Naive thymus-derived CD4-positive, alpha-beta T cell (primary cell): ENCODE measurements at regions of chr2 and their contacts with region 1.

Region 1: DNA sequence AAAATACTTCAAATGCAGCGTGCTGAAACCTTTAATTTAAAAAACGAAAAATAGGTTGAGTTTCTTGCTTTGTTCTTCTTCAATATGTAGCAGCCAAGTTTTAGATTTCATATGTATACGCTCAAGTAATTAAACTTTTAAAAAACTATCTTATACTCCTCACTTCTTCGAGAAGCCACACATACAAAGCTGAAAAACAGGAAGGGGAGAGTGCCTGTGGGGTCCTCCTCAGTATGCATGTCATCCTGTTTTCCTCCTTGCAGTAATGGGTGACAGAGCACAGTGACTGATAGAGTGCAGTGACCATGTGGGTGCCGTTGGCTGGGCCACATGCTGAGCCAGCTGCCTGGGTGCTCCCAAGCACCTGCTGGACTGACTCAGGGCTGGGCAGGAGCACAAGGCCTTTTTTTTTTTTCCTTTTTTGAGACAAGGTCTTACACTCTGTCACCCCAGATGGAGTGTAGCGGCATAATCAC is 33.3 kb downstream of the UXS1 start:
- DNase-seq: peak in 8 of 9 donors; percentile 33 to 70 (median 62)
- ATAC-seq: peak; percentile 75
- H3K4me3 ChIP-seq: peak overlapping the region; percentile 77
- H3K4me3 Mint-ChIP-seq: peak overlapping the region; percentile 87 to 98 (median 95)
- H3K27ac ChIP-seq: peak overlapping the region; percentile 81
- H3K27ac Mint-ChIP-seq: peak overlapping the region; percentile 95 to 99 (median 98)
- H3K4me1 ChIP-seq: peaks cover 43 to 78% of the 10 kb centered on the region in 2 donors
- H3K4me1 Mint-ChIP-seq: peaks cover 47 to 100% (median 97%) of the 10 kb centered on the region in 7 donors
- H3K27me3 ChIP-seq: no peaks in the 10 kb centered on the region
- H3K27me3 Mint-ChIP-seq: no peaks in the 10 kb centered on the region

Region 2: DNA sequence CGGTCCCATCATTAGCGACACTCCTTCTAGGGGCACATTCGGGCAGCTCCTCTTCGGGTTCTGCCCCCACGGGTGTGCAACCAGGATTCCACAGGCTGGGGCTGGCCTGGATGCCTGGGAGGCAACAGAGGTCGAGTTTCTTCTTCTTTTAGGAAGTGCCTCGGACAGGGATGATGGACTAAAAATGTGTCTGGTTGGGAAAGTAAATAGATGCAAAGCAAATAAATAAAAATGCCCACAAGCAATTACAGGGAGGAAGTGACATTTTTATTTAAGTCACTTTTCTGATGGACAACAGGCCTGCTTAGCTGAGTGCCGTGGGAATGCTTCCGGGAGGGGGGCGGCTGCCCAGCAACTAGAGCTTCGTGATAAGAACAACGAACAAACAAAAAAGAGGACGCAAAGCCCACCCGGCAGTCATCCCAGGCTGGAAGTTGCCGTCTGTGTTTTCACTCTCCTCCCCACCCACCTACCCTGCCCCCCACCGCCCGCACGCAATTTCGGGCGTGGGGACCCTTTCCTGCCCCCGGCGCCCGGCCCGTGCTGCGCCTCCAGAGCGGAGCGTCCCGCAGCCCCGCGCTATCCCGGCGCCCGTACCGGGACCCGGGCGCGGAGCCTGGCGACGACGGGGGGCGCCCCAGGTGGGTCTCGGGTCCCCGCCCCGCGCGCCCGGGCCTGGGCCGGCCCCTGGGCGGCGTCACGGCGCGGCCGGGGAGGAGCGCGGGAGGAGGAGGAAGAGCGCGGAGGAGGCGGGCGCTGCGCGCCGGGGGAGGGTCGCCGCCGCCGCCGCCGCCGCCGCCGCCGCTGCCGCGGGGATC is 416.5 kb before region 1 on chr2:
- CTCF ChIA-PET with region 1: interaction called, 3 read pairs
- POLR2A ChIA-PET with region 1: interaction called, 4 read pairs
- intact Hi-C with region 1: loop called in 1 of 2 experiments (anchors 5 kb)
- DNase-seq: peak; percentile 57 to 79 (median 69)
- ATAC-seq: peak; percentile 87
- H3K4me3 ChIP-seq: peak overlapping the region; percentile 24
- H3K4me3 Mint-ChIP-seq: peak overlapping the region; percentile 76 to 96 (median 90)
- H3K27ac ChIP-seq: peak overlapping the region; percentile 80
- H3K27ac Mint-ChIP-seq: peak overlapping the region; percentile 90 to 96 (median 95)
- H3K4me1 ChIP-seq: peaks cover 48 to 54% of the 10 kb centered on the region in 2 donors
- H3K4me1 Mint-ChIP-seq: peaks cover 49 to 82% (median 77%) of the 10 kb centered on the region in 7 donors
- H3K27me3 ChIP-seq: no peaks in the 10 kb centered on the region
- H3K27me3 Mint-ChIP-seq: no peaks in the 10 kb centered on the region

Region 3: DNA sequence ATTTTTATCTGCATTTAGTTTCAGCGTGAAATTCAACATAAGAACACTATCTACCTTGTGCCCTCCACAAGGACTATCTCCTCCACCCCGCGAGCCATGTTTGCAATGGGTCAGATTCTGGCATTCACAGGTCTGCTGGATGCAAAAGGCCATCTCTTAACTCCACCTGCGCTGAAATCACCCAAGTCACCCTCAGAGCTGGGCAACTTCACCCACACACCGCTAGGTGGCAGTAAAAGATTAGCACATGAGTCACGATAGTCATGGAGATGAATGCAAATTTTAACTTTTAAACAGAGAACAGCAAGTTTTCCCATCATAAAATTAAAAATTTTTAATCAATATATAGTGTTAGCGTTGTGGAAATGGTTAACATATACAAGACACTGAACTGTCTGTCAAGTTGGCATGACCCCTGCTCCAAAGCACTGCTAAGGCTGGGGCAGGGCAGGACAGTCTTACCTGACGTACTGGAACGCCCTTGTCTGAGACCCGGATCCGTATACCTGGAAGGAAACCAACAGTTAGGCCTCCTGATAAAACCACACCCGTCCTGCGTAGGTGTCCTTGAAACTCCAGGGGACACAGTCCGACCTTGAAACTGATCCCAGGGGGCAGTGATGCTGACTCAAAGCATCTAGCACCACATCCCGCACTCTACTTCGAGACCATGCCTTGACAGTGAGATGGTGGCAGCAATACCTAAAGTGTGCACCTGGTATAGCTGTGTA is 56.3 kb before region 1 on chr2:
- CTCF ChIA-PET with region 1: interaction called, 7 read pairs
- POLR2A ChIA-PET with region 1: interaction called, 5 read pairs
- intact Hi-C with region 1: loop called in 1 of 2 experiments (anchors 5 kb)
- DNase-seq: peak in 8 of 9 donors; percentile 55 to 78 (median 70)
- ATAC-seq: peak; percentile 84
- H3K4me3 ChIP-seq: no peak overlapping the region
- H3K4me3 Mint-ChIP-seq: no peak overlapping the region
- H3K27ac ChIP-seq: no peak overlapping the region
- H3K27ac Mint-ChIP-seq: peak overlapping the region in 7 of 9 donors; percentile 3 to 73 (median 21)
- H3K4me1 ChIP-seq: no peaks in the 10 kb centered on the region
- H3K4me1 Mint-ChIP-seq: peaks cover 0 to 20% (median 13%) of the 10 kb centered on the region in 7 donors
- H3K27me3 ChIP-seq: no peaks in the 10 kb centered on the region
- H3K27me3 Mint-ChIP-seq: no peaks in the 10 kb centered on the region

Region 4: DNA sequence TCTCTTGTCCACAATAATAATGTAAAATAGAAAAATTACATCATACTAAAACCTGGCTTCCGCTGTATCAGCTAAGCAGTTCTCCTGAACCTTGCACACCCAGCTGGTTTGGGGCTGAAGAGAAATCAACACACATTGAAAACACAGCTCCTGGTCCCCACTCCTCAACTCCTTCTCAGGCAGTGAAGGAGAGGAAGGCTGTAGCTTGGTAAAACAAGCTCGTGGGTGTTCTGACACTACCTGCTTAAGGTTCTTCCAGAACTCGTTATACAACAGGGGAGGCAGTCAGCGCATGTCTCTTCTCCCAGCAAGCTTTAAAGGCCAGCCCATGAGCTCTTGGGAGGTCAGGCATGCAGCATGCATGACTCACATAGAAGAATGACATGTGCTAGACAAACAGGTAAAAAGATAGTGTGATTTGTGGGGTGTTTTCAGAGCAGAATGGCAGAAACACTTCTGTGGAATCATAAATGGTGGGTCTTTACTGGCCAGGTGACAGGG is 35.9 kb before region 1 on chr2:
- CTCF ChIA-PET with region 1: no interaction called
- POLR2A ChIA-PET with region 1: interaction called, 3 read pairs
- intact Hi-C with region 1: loop called (anchors 5 kb)
- DNase-seq: no peak
- ATAC-seq: no peak
- H3K4me3 ChIP-seq: no peak overlapping the region
- H3K4me3 Mint-ChIP-seq: no peak overlapping the region
- H3K27ac ChIP-seq: no peak overlapping the region
- H3K27ac Mint-ChIP-seq: peak overlapping the region in 6 of 9 donors; percentile 16 to 76 (median 56)
- H3K4me1 ChIP-seq: no peaks in the 10 kb centered on the region
- H3K4me1 Mint-ChIP-seq: peaks cover 8 to 31% (median 23%) of the 10 kb centered on the region in 7 donors
- H3K27me3 ChIP-seq: no peaks in the 10 kb centered on the region
- H3K27me3 Mint-ChIP-seq: no peaks in the 10 kb centered on the region

Region 5: DNA sequence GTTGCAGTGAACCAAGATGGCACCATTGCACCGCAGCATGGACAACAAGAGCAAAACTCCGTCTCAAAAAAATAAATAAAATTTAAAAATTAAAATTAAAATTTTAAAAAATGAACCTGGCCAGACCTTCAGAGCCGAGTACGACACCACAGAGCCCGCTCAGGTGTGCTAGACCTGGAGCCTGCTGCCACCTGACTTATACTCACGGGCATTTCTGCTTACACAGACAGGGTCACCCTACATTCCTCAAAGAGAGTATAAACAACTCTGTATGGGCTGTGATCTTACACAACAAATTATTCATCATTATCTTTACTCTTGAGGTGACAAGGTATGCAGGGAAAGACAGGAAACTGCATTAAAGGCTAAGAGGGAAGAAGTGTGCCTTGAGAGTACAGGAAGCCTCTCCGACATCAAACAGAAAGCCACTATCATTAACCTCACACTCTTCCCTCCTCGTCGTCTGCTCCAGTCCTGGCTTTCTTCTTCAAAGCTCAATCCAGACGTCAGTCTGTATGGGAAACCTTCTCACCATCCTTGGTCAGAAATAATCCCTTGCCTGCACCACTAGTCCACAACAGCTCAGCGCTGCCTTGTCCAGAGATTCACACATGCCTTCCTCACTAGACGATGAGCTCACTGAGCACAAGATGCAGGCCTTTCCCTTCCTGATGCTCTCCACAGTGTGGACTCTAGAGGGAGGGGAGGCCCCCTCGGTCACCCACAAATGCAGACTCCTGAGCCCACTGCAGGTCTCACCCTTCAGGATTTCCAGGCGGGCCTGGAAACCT is 22.9 kb before region 1 on chr2:
- CTCF ChIA-PET with region 1: interaction called, 9 read pairs
- POLR2A ChIA-PET with region 1: interaction called, 104 read pairs
- intact Hi-C with region 1: no loop called
- DNase-seq: peak in 7 of 9 donors; percentile 33 to 53 (median 45)
- ATAC-seq: peak; percentile 76
- H3K4me3 ChIP-seq: peak overlapping the region; percentile 46
- H3K4me3 Mint-ChIP-seq: peak overlapping the region; percentile 73 to 90 (median 84)
- H3K27ac ChIP-seq: peak overlapping the region; percentile 70
- H3K27ac Mint-ChIP-seq: peak overlapping the region; percentile 87 to 97 (median 92)
- H3K4me1 ChIP-seq: peaks cover 6 to 34% of the 10 kb centered on the region in 2 donors
- H3K4me1 Mint-ChIP-seq: peaks cover 30 to 53% (median 50%) of the 10 kb centered on the region in 7 donors
- H3K27me3 ChIP-seq: no peaks in the 10 kb centered on the region
- H3K27me3 Mint-ChIP-seq: no peaks in the 10 kb centered on the region

Region 6: GRCh38 chr2:106147159-106147558 is 13.7 kb before region 1 on chr2:
- CTCF ChIA-PET with region 1: interaction called, 9 read pairs
- POLR2A ChIA-PET with region 1: interaction called, 104 read pairs
- intact Hi-C with region 1: no loop called
- DNase-seq: no peak
- ATAC-seq: no peak
- H3K4me3 ChIP-seq: no peak overlapping the region
- H3K4me3 Mint-ChIP-seq: no peak overlapping the region
- H3K27ac ChIP-seq: no peak overlapping the region
- H3K27ac Mint-ChIP-seq: peak overlapping the region in 6 of 9 donors; percentile 8 to 74 (median 40)
- H3K4me1 ChIP-seq: peaks cover 3 to 6% of the 10 kb centered on the region in 2 donors
- H3K4me1 Mint-ChIP-seq: peaks cover 44 to 84% (median 69%) of the 10 kb centered on the region in 7 donors
- H3K27me3 ChIP-seq: no peaks in the 10 kb centered on the region
- H3K27me3 Mint-ChIP-seq: no peaks in the 10 kb centered on the region

Region 7: DNA sequence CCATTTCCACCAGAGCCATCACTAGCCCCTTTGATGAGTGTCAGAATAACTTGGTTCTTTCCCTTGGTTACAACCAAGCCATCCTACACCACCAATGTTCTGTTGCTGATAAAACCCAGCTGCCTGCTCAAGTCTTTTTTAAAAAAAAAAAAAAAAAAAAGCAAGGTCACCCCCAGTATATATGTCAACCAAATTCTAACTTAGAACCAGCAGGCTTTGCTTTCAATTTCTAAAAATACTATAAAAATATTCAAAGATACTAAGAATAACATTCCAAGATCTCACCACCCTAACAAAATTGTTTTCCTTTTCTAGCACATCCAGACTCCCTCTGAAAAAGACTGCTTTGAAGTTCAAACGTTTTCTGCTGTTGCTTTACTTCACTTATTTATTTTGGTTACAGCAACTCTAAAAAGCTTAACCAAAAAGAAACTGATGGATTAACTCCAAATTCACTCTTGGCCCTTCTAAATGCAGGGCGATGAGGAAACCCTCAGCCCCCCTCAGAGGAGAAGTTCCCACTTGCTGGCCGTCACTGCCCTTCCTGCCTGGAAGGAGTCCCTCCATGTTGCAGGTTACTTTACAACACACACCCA is 22.4 kb after region 1 on chr2:
- CTCF ChIA-PET with region 1: interaction called, 3 read pairs
- POLR2A ChIA-PET with region 1: interaction called, 10 read pairs
- intact Hi-C with region 1: no loop called
- DNase-seq: no peak
- ATAC-seq: no peak
- H3K4me3 ChIP-seq: no peak overlapping the region
- H3K4me3 Mint-ChIP-seq: peak overlapping the region in 6 of 10 donors; percentile 42 to 76 (median 56)
- H3K27ac ChIP-seq: no peak overlapping the region
- H3K27ac Mint-ChIP-seq: peak overlapping the region in 7 of 9 donors; percentile 29 to 87 (median 46)
- H3K4me1 ChIP-seq: peaks cover 0 to 38% of the 10 kb centered on the region in 2 donors
- H3K4me1 Mint-ChIP-seq: peaks cover 36 to 96% (median 84%) of the 10 kb centered on the region in 7 donors
- H3K27me3 ChIP-seq: no peaks in the 10 kb centered on the region
- H3K27me3 Mint-ChIP-seq: no peaks in the 10 kb centered on the region